Activated T-helper 2 cell treated with anti-CD3 and anti-CD28 coated beads, Interferon-gamma antibody, Interleukin-2, Interleukin-4, amounts not matched to agents 10 μg/mL and 5 μg/mL and 100 μg/mL, durations not matched to agents 14 hours and 24 hours and 36 hours (primary cell): ENCODE measurements at regions of chr13 and their contacts with region 1.

Region 1: DNA sequence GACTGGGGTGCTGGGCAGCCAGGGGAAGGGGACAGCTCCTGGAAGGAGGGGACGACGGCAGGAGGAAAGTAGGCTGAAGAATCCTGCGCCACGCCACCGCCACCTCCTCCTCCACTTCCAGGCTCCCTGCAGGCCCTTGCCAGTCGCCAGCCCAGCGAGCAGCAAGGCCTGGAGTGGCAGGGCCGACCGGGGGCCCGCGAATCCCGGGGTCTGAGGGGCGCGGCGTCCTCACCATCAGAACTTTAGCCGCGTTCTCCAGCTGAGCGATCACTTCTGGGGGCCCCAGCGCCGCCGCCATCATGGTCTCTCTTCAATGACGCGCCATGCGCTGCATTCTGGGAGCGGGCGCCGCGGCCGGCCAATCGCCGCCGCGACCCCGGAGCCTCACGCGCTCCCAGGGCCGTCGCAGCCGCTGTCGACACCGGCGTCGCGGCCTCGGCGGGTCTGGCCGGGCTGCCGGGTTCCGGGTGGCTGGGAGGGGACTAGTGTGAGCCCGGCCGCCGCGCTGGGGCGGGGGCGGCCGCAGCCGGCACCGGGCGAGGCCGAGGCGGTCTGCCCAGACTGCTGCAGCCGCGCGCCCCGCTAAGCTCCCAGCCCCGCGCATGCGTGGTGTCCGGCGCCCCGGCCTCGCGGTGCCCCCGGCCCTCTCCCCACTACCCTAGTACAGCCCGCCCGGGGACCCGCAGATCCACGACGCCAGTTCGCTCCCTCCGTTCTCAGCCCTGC is at the start of gene XPO4:
- DNase-seq: peak; percentile 81
- H3K4me3 Mint-ChIP-seq: peak within 1 kb of the TSS; percentile 96
- H3K27ac Mint-ChIP-seq: peak within 1 kb of the TSS; percentile 96
- H3K4me1 Mint-ChIP-seq: peaks cover 25% of the 10 kb centered on the region
- H3K27me3 Mint-ChIP-seq: no peaks in the 10 kb centered on the region
- total RNA-seq, gene XPO4: 25.5 and 28.0 TPM in 2 replicates

Region 2: GRCh38 chr13:20773194-20774080 is 129.2 kb before region 1 on chr13 and contains the start of gene EEF1AKMT1:
- intact Hi-C with region 1: loop called (anchors 2 kb)
- DNase-seq: peak; percentile 93
- H3K4me3 Mint-ChIP-seq: peak within 1 kb of the TSS; percentile 95
- H3K27ac Mint-ChIP-seq: peak within 1 kb of the TSS; percentile 99
- H3K4me1 Mint-ChIP-seq: peaks cover 23% of the 10 kb centered on the region
- H3K27me3 Mint-ChIP-seq: no peaks in the 10 kb centered on the region
- total RNA-seq, gene EEF1AKMT1: 12.2 and 12.7 TPM in 2 replicates

Region 3: GRCh38 chr13:20831933-20832332 is 70.7 kb before region 1 on chr13:
- intact Hi-C with region 1: no loop called
- DNase-seq: no peak
- H3K4me3 Mint-ChIP-seq: no peak overlapping the region
- H3K27ac Mint-ChIP-seq: no peak overlapping the region
- H3K4me1 Mint-ChIP-seq: peaks cover 13% of the 10 kb centered on the region
- H3K27me3 Mint-ChIP-seq: no peaks in the 10 kb centered on the region

Region 4: DNA sequence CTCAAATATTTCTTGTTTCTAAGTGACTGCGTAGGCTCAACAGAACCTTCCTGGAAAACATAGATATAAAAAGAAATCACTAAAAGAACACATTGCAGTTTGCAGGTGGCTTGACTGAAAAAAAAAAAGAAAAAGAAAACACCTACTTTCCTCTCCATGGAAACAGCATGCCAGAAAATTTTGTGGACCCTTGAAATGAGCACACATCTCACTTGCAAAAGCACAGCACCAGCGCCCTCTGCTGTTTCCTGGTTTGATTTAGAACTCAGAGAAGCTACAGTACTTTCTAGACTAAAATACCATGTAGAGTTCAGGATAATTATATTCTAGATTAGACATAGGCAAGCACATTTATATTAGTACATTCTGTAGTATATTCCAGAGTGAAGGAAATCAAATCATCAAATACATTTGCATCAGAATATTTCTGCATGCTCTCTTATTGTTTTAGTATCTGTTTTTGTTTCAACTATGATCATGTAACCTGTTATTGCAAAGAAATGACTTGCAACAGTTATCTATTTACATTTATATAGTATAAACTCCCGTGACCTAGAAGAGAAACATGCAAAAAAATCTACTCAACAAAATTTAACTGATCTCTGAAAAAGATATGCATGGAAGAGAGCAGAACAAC is 22.3 kb after region 1 on chr13:
- intact Hi-C with region 1: no loop called
- DNase-seq: peak; percentile 41
- H3K4me3 Mint-ChIP-seq: no peak overlapping the region
- H3K27ac Mint-ChIP-seq: no peak overlapping the region
- H3K4me1 Mint-ChIP-seq: no peaks in the 10 kb centered on the region
- H3K27me3 Mint-ChIP-seq: no peaks in the 10 kb centered on the region